Activated naive CD4-positive, alpha-beta T cell treated with anti-CD3 and anti-CD28 coated beads for 36 hours (primary cell): ENCODE measurements at regions of chr11 and their contacts with region 1.

Region 1: DNA sequence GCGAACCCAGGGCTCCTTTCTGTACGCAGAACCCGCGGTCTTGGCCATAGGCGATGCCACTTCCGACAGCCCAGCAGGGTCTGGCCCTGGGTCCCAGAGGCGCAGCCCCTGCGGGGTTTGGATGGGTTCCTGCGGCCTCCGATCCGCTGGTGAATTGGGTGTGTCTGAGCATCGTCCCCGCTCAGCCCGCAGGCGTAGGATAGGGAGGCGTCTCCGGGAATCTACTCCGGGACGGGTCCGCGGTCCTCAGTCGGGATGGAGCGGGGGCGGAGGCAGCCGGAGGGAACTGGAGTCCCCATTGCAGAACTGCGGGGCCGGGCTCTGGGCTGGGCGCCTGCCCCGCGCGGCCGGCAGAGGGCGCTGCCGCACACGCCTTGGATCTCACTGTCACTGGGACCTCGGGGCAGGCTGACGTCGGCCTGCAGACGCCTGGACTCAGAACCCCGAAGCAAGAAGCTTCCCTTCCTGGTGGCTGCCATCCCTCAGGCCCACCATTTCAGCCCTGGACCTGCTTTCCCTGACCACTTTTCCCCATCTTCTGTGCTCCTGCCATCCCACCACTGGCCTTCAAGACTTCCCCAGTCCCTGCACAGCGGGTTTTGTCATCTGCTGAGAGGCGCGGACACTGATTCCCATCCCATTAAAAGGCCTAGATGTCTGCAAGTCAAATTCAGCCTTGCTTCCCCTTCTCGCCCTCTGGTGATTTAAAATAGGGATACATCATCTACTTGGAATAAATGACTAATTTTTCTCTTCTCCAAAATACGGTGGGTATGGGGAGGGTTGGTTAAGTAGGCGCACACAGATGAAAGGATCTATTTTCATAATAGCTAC is 38.3 kb upstream of the CREB3L1 start:
- DNase-seq: peak; percentile 86
- H3K4me3 Mint-ChIP-seq: peak overlapping the region; percentile 75
- H3K27ac Mint-ChIP-seq: no peak overlapping the region
- H3K4me1 Mint-ChIP-seq: peaks cover 36% of the 10 kb centered on the region
- H3K27me3 Mint-ChIP-seq: peaks cover 4% of the 10 kb centered on the region

Region 2: GRCh38 chr11:45846974-45847910 is 391.9 kb before region 1 on chr11 and contains the start of gene CRY2:
- CTCF ChIA-PET with region 1: no interaction called
- intact Hi-C with region 1: loop called (anchors 2 kb)
- DNase-seq: peak; percentile 99
- H3K4me3 Mint-ChIP-seq: peak within 1 kb of the TSS; percentile 78
- H3K27ac Mint-ChIP-seq: peak within 1 kb of the TSS; percentile 63
- H3K4me1 Mint-ChIP-seq: peaks cover 45% of the 10 kb centered on the region
- H3K27me3 Mint-ChIP-seq: no peaks in the 10 kb centered on the region
- total RNA-seq, gene CRY2: 13.9 to 16.2 TPM

Region 3: DNA sequence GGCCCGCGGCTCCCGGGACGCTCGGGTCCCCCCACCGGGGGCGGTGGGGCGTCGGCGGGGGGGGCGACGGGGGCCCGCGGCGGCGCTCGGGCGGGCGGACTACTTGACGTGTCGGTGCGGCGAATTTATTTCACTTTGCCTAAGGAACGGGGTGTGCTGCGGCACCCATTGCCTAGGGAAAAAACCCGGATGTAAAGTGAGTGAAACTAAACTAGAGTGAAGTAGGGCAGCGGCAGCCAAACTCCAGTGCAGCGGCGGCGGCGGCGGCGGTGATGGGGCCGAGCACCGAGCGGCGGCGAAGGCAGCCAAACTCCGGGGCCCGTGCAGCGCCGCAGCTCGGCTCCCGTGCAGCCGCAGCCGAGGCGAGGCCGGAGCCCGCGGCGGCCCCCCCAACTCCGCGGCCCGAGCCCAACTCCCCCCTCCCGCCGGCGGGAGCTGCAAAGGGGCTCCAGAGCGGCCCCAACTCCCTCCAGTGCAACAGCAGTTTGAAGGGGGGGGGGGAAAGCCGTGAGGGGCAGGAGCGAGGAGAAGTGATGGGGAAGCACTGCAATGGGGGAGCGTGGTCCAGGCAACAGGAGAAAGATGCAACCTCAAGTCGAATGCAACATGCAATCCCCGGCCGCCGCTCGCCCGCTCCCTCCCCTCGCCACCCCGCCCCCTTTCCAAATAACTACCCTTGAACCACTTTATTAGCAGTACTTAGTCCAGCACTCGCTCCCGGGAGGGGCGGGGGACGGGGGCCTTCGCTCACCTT is 117.3 kb before region 1 on chr11:
- CTCF ChIA-PET with region 1: interaction called, 11 read pairs
- intact Hi-C with region 1: loop called (anchors 1 kb)
- DNase-seq: peak; percentile 79
- H3K4me3 Mint-ChIP-seq: peak overlapping the region; percentile 81
- H3K27ac Mint-ChIP-seq: peak overlapping the region; percentile 85
- H3K4me1 Mint-ChIP-seq: peaks cover 41% of the 10 kb centered on the region
- H3K27me3 Mint-ChIP-seq: no peaks in the 10 kb centered on the region

Region 4: DNA sequence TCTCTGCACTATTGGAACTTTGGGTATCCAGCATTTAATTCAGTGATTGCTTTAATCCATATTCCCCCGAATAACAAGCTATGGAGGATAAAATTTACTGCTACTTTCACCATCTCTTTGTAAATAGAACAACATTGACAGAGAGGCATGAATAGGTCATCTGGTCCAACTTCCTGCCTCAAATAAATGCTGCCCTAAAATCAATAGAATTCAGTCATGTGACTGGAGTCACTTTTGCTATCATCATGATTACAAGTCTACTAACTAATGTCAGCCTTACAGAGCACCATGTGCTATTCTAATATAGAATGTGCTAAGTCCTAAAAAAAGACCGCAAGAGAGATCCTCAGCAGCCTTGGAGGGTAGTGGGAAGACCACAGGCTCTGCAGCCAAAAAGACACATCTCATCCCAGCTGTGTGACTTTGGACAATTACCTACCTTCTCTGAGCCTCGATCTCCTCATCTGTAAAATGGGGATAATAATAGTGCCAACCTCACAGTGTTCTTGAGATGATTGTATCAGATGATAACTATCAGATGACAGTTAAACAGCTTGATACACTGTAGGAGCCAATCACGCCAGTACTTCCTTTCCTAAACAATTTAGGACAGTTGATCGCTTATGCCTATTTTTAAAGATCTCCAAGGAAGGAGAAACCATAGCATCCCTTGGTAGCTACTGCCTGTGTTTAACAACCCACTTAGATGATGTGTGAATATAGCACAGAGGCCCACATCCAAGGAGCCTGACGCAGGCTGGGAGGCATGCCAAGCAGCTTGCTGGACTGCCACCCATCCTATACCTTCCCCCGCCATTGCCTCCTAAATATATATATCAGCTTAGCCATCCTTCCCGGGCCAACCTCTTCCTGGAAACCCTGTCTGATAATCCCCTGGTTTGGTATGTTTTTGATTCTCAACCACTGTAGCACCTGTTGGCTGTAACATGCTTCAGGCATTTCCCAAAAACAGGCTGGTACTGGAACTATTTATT is 40.6 kb before region 1 on chr11:
- CTCF ChIA-PET with region 1: no interaction called
- intact Hi-C with region 1: no loop called
- DNase-seq: no peak
- H3K4me3 Mint-ChIP-seq: no peak overlapping the region
- H3K27ac Mint-ChIP-seq: no peak overlapping the region
- H3K4me1 Mint-ChIP-seq: no peaks in the 10 kb centered on the region
- H3K27me3 Mint-ChIP-seq: peaks cover 10% of the 10 kb centered on the region

Region 5: GRCh38 chr11:46308631-46309419 is 69.6 kb after region 1 on chr11:
- CTCF ChIA-PET with region 1: interaction called, 298 read pairs
- intact Hi-C with region 1: loop called (anchors 1 kb)
- DNase-seq: peak; percentile 85
- H3K4me3 Mint-ChIP-seq: no peak overlapping the region
- H3K27ac Mint-ChIP-seq: no peak overlapping the region
- H3K4me1 Mint-ChIP-seq: peaks cover 7% of the 10 kb centered on the region
- H3K27me3 Mint-ChIP-seq: no peaks in the 10 kb centered on the region

Region 6: DNA sequence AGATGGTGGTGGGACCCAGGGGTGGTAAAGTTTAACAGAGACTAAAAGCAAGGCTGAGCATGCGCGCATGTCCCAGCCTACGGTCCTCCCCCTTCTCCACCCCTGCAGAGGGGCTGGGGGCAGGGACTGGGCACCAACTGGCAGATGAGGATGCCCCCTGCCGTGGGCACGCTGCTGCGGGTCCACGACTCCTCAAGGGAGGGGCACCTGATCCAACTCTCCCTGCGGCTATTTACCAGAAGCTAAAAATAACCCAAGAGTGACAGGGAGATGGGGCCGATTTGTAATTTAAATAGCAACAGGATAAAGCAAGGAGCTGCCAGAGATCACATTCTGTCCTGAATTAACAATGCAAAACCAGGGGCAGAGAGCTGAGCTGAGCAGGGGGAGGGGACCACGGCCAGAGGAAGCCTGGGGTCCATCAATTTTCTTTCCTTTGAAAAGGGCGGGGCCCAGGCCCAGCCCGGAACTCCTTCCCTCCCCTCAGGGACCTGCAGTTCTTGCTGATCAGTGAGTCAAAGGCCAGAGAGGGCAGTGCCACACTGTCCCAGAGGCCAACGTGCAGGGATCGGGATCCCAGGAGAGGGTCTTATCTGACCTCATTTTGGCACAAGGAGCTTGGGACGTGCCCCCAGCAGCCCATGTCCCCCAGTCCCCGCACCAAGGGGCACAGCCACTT is 99.9 kb after region 1 on chr11:
- CTCF ChIA-PET with region 1: interaction called, 12 read pairs
- intact Hi-C with region 1: no loop called
- DNase-seq: no peak
- H3K4me3 Mint-ChIP-seq: no peak overlapping the region
- H3K27ac Mint-ChIP-seq: peak overlapping the region; percentile 69
- H3K4me1 Mint-ChIP-seq: peaks cover 80% of the 10 kb centered on the region
- H3K27me3 Mint-ChIP-seq: no peaks in the 10 kb centered on the region

Region 7: DNA sequence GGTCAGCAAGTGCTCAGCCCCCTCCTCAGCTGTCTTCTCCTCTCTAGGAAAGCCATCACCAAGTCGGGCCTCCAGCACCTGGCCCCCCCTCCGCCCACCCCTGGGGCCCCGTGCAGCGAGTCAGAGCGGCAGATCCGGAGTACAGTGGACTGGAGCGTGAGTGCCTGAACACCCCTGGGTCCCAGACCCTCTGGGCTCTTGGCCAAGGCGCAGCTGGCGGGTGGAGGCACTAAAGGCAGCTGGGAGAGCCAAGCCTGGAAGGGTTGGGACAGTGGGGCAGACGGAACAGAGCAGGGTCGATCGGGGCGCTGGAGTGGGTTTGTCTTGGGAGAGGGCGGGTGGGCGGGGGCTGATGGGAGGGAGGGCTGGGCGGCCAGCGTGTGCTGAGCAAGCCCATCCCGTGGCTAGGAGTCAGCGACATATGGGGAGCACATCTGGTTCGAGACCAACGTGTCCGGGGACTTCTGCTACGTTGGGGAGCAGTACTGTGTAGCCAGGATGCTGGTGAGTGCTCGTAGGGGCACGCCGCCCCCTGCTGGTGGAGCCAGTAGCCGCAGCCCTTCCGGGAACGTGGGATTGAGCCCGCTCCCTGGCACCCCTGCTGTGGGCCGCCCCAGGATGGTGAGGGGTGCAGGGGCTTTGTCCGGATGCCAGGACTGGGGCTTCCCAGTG is 128.2 kb after region 1 on chr11:
- CTCF ChIA-PET with region 1: interaction called, 8 read pairs
- intact Hi-C with region 1: loop called (anchors 1 kb)
- DNase-seq: peak; percentile 85
- H3K4me3 Mint-ChIP-seq: no peak overlapping the region
- H3K27ac Mint-ChIP-seq: peak overlapping the region; percentile 80
- H3K4me1 Mint-ChIP-seq: peaks cover 29% of the 10 kb centered on the region
- H3K27me3 Mint-ChIP-seq: no peaks in the 10 kb centered on the region

Region 8: DNA sequence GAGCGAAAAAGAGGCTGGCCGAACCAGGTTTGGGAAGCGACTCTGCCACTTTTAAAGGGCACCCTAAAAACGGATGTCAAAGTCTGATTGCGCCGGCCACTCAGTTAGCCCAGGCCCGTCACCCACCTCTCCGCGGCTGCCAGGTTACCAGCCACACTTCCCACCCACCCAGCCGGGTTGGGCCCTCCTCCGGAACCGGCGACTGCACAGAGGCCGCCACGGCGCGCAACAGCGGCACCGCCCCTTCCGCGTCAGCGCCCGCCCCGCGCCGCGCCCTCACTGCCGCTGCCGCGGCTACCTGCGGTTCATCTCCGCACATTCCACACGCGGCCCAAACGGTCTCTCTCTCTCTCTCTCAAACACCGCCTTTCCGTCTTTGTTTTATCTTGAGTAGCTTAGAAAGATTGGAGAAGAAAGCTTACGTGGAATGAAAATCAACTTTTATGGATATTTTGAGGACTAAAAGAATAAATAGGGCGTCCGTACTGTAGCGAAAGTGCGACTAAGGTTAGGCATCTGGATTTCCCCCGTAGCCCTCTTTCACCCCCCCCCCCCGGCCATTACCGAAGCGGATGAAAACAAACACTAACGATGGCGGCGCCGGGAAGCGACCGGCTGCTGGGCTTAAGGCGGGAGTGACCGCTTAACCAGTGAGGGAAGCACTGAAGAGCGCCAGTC is 378.0 kb after region 1 on chr11 and contains the starts of genes ATG13 and HARBI1:
- CTCF ChIA-PET with region 1: no interaction called
- intact Hi-C with region 1: loop called (anchors 1 kb)
- DNase-seq: peak; percentile 90
- H3K4me3 Mint-ChIP-seq: peak within 1 kb of the TSS; percentile 89
- H3K27ac Mint-ChIP-seq: peak within 1 kb of the TSS; percentile 99
- H3K4me1 Mint-ChIP-seq: peaks cover 40% of the 10 kb centered on the region
- H3K27me3 Mint-ChIP-seq: no peaks in the 10 kb centered on the region
- total RNA-seq, gene ATG13: 54.7 to 55.6 TPM
- total RNA-seq, gene HARBI1: 2.8 to 3.1 TPM